Ascending aorta (tissue), 2 donors: ENCODE measurements at regions of chr1 and their contacts with region 1.

Region 1: DNA sequence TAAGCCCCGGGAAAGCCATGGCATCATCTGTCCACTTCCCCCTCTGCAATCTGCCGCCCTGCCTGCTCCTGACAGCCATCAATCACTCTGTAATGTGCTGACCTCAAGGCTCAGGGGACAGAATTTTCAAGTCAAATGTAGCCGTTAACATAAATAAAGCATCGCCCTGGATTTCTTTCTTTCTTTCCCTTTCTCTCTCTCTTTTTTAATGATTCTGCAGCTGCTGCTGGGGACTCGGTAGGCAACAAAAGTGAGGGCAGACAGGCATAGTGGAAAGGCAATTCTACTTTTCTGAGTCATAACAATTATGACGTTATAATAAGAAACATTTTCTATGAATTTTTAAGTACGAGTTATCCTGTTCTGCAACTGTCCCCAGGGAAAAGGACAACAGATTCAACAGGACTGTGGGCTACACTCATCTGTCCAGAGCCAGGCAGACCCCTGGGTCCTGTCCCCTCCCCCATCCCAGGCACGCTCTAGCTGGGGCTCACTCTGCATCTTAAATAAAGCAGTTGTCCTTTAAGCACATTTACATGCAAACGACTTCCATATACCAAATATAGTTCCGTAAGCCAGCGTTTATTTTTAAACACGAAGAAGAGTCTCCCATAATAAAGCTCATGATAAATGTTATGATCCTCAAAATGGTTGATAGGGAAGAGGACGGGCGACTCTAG is 78.7 kb downstream of the SSBP3 start:
- DNase-seq: no peak
- H3K4me3 ChIP-seq: no peak overlapping the region
- H3K27ac ChIP-seq: peak overlapping the region in 1 of 2 donors; percentile 55
- H3K4me1 ChIP-seq: peaks cover 0 to 39% of the 10 kb centered on the region in 2 donors
- H3K27me3 ChIP-seq: no peaks in the 10 kb centered on the region
- CTCF ChIP-seq: no peak

Region 2: DNA sequence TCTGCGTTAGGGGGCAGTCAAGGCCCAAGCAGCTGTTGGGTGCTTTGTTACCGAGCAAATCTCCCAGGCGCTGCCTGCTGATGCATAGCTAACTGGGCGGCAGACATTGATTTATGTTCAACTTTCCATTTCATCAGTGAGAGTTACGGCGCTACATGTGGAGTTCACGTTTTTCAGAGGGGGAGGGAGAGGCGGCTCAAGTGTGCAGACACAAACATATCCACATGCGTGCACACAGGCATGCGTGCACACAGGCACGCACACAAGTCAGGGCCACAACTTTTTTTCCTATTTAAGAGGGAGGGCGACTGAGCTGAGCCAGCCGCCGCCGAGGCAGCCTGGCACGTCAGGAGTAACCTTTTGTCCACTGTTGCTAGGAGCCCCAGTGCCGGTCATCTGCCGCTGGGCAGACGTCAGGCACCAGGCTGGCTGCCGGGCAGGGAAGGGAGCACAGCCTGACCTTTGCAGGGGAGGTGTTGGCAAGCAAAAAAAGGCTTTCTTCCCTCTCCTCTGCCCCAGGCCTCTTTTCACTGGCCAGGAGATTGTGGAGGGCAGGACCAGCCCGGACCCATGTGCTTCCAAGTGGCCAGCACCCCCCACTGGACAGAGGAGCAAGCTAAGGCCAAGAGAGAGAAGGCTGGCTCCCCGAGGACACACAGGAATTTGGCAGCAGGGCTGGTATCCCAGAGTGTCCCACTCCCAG is 54.3 kb before region 1 on chr1:
- intact Hi-C with region 1: no loop called
- DNase-seq: peak; percentile 53 to 93
- H3K4me3 ChIP-seq: peak overlapping the region in 1 of 2 donors; percentile 35
- H3K27ac ChIP-seq: peak overlapping the region; percentile 96 to 98
- H3K4me1 ChIP-seq: peaks cover 34 to 55% of the 10 kb centered on the region in 2 donors
- H3K27me3 ChIP-seq: no peaks in the 10 kb centered on the region
- CTCF ChIP-seq: peak; percentile 77 to 84 (median 83)

Region 3: GRCh38 chr1:54310439-54311328 is 16.8 kb before region 1 on chr1:
- intact Hi-C with region 1: loop called (anchors 2 kb)
- DNase-seq: no peak
- H3K4me3 ChIP-seq: no peak overlapping the region
- H3K27ac ChIP-seq: peak overlapping the region; percentile 43 to 60
- H3K4me1 ChIP-seq: peaks cover 3 to 34% of the 10 kb centered on the region in 2 donors
- H3K27me3 ChIP-seq: no peaks in the 10 kb centered on the region
- CTCF ChIP-seq: peak in 2 of 3 experiments; percentile 13 to 28

Region 4: DNA sequence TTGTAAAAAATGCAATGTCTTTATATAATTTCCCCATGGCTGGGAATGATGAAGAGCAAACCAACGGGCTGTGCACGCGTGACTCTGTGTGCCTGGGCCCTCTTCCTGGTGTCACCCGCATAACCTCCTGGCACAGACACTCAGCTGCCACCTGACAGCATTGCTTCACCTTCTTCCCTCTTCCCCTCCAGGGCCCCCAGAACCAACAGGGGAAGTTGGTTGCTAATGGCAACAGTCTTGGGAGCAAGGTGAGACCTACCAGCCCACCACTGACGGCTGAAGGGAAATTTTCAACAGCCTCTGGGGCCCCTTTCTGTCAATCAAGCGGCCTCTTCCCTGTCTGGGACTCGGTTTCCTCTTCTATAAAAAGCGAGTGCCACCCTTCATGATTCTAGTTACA is 45.5 kb after region 1 on chr1:
- intact Hi-C with region 1: no loop called
- DNase-seq: no peak
- H3K4me3 ChIP-seq: no peak overlapping the region
- H3K27ac ChIP-seq: no peak overlapping the region
- H3K4me1 ChIP-seq: peaks cover 0 to 4% of the 10 kb centered on the region in 2 donors
- H3K27me3 ChIP-seq: no peaks in the 10 kb centered on the region
- CTCF ChIP-seq: no peak